CD4-positive, alpha-beta T cell (primary cell): ENCODE measurements at regions of chr15 and their contacts with region 1.

Region 1: DNA sequence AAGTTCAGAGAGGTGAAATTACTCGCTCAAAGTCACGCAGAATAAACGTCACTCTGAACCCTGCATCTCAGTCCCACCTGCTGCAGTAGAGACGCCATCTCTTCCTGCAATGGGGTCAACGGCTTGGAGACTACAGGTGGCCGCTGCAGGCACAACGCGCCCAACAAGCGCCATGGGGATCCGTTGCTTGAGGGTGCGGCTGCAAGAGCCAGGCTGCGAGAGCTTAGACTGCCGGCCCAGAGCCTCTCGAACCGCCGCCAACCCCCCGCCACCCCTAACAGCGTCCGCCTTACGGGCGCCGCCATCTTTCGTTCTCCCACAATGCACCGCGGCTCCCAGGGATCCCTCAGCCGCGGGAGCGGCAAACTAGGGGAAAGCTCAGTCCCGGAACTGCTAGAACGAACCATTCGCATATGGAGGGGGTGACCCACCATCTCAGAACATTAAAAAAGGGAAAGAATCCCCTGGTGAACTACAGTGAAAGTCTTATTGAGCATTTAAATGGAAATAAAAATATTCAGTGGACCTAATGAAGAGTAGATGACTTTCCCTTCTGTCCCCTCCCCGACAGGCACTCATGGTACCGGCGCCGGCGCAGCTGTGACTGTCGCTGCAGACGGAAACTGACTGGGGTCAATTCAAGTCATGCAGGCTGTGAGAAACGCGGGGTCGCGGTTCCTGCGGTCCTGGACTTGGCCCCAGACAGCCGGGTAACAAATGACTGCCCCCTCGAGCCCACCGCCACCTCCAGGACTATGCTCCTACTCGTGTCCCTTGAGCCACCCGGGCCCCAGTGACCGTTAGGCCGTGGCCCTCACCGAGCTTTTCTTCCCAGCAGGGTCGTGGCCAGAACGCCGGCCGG is at the starts of genes MRPL46 and MRPS11:
- DNase-seq: peak; percentile 82 to 94 (median 87)
- ATAC-seq: peak; percentile 91
- H3K4me3 ChIP-seq: peak within 1 kb of the TSS; percentile 74
- H3K4me3 Mint-ChIP-seq: peak within 1 kb of the TSS; percentile 98
- H3K27ac ChIP-seq: peak within 1 kb of the TSS; percentile 80 to 96
- H3K27ac Mint-ChIP-seq: peak within 1 kb of the TSS; percentile 99
- H3K4me1 ChIP-seq: peaks cover 19% of the 10 kb centered on the region
- H3K4me1 Mint-ChIP-seq: peaks cover 43% of the 10 kb centered on the region
- H3K27me3 ChIP-seq: no peaks in the 10 kb centered on the region
- H3K27me3 Mint-ChIP-seq: no peaks in the 10 kb centered on the region
- CTCF ChIP-seq: no peak
- total RNA-seq, gene MRPL46: 8.6 to 10.2 TPM
- total RNA-seq, gene MRPS11: 8.0 to 8.4 TPM

Region 2: GRCh38 chr15:88454867-88455810 is 12.2 kb before region 1 on chr15:
- CTCF ChIA-PET with region 1: interaction called, 3 read pairs
- POLR2A ChIA-PET with region 1: interaction called, 10 read pairs
- intact Hi-C with region 1: no loop called
- DNase-seq: peak in 13 of 14 experiments; percentile 9 to 69 (median 24)
- ATAC-seq: peak; percentile 90
- H3K4me3 ChIP-seq: no peak overlapping the region
- H3K4me3 Mint-ChIP-seq: no peak overlapping the region
- H3K27ac ChIP-seq: no peak overlapping the region
- H3K27ac Mint-ChIP-seq: no peak overlapping the region
- H3K4me1 ChIP-seq: peaks cover 9% of the 10 kb centered on the region
- H3K4me1 Mint-ChIP-seq: peaks cover 6% of the 10 kb centered on the region
- H3K27me3 ChIP-seq: no peaks in the 10 kb centered on the region
- H3K27me3 Mint-ChIP-seq: peaks cover under 1% of the 10 kb centered on the region
- CTCF ChIP-seq: peak; percentile 58

Region 3: DNA sequence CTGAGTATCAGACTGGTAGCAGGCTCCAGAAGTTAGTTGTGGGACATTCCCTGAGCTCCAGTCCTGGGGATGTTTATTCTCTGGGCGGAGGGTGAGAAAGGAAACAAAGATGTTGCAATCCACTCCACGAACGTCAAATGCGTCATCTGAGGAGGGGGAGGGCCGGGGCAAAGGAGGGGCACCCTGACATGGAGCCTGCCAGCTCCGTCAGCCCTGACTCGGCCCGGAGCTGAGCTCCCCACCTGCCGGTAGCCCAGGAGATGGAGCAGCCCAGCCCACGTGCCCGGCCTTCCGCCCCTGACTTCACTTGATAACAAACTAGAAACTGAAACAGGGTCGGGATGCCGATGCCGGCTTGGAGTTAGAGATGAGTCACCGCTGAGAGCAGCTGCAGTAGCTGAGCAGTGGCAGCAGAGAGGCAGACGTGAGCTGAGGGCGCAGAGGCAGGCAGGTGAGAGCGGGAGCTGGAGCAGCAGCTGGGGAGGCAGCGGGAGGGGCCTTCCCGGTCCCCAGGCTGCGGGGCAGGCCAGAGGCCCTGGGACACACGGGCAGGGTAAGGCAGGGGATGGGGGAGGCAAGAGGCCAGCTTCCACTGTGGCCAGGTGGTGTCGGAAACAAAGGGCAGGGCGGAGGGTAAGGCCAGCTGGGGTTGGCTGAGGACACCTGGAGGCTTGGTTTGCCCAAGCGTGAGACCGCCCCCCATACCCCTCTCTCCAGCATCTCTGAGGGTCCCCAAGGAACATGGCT is 171.5 kb after region 1 on chr15 and contains the start of gene ISG20:
- CTCF ChIA-PET with region 1: interaction called, 7 read pairs
- POLR2A ChIA-PET with region 1: interaction called, 18 read pairs
- intact Hi-C with region 1: no loop called
- DNase-seq: peak; percentile 93 to 100 (median 96)
- ATAC-seq: peak; percentile 77
- H3K4me3 ChIP-seq: peak within 1 kb of the TSS; percentile 76
- H3K4me3 Mint-ChIP-seq: peak within 1 kb of the TSS; percentile 92
- H3K27ac ChIP-seq: peak within 1 kb of the TSS; percentile 99 to 100
- H3K27ac Mint-ChIP-seq: peak within 1 kb of the TSS; percentile 95
- H3K4me1 ChIP-seq: peaks cover 96% of the 10 kb centered on the region
- H3K4me1 Mint-ChIP-seq: peaks cover 77% of the 10 kb centered on the region
- H3K27me3 ChIP-seq: no peaks in the 10 kb centered on the region
- H3K27me3 Mint-ChIP-seq: no peaks in the 10 kb centered on the region
- CTCF ChIP-seq: peak; percentile 65
- total RNA-seq, gene ISG20: 152 to 157 TPM

Region 4: GRCh38 chr15:88897456-88898194 is 430.3 kb after region 1 on chr15:
- CTCF ChIA-PET with region 1: no interaction called
- POLR2A ChIA-PET with region 1: no interaction called
- intact Hi-C with region 1: loop called (anchors 5 to 10 kb)
- DNase-seq: peak; percentile 68 to 93 (median 83)
- ATAC-seq: peak; percentile 88
- H3K4me3 ChIP-seq: peak overlapping the region; percentile 20
- H3K4me3 Mint-ChIP-seq: peak overlapping the region; percentile 76
- H3K27ac ChIP-seq: no peak overlapping the region
- H3K27ac Mint-ChIP-seq: peak overlapping the region; percentile 60
- H3K4me1 ChIP-seq: peaks cover 56% of the 10 kb centered on the region
- H3K4me1 Mint-ChIP-seq: peaks cover 49% of the 10 kb centered on the region
- H3K27me3 ChIP-seq: no peaks in the 10 kb centered on the region
- H3K27me3 Mint-ChIP-seq: no peaks in the 10 kb centered on the region
- CTCF ChIP-seq: peak; percentile 63

Region 5: GRCh38 chr15:89575146-89575655 is 1107.9 kb after region 1 on chr15 and contains the start of gene TICRR:
- CTCF ChIA-PET with region 1: no interaction called
- POLR2A ChIA-PET with region 1: interaction called, 3 read pairs
- intact Hi-C with region 1: loop called in 1 of 2 experiments (anchors 5 kb)
- DNase-seq: peak; percentile 86 to 98 (median 91)
- ATAC-seq: peak; percentile 98
- H3K4me3 ChIP-seq: peak within 1 kb of the TSS; percentile 68
- H3K4me3 Mint-ChIP-seq: peak within 1 kb of the TSS; percentile 91
- H3K27ac ChIP-seq: no peak within 1 kb of the TSS
- H3K27ac Mint-ChIP-seq: peak within 1 kb of the TSS; percentile 43
- H3K4me1 ChIP-seq: peaks cover 17% of the 10 kb centered on the region
- H3K4me1 Mint-ChIP-seq: peaks cover 5% of the 10 kb centered on the region
- H3K27me3 ChIP-seq: no peaks in the 10 kb centered on the region
- H3K27me3 Mint-ChIP-seq: peaks cover 11% of the 10 kb centered on the region
- CTCF ChIP-seq: no peak
- total RNA-seq, gene TICRR: 0.05 to 0.06 TPM